Right cardiac atrium (tissue), 5 donors: ENCODE measurements at regions of chrX and their contacts with region 1.

Region 1: DNA sequence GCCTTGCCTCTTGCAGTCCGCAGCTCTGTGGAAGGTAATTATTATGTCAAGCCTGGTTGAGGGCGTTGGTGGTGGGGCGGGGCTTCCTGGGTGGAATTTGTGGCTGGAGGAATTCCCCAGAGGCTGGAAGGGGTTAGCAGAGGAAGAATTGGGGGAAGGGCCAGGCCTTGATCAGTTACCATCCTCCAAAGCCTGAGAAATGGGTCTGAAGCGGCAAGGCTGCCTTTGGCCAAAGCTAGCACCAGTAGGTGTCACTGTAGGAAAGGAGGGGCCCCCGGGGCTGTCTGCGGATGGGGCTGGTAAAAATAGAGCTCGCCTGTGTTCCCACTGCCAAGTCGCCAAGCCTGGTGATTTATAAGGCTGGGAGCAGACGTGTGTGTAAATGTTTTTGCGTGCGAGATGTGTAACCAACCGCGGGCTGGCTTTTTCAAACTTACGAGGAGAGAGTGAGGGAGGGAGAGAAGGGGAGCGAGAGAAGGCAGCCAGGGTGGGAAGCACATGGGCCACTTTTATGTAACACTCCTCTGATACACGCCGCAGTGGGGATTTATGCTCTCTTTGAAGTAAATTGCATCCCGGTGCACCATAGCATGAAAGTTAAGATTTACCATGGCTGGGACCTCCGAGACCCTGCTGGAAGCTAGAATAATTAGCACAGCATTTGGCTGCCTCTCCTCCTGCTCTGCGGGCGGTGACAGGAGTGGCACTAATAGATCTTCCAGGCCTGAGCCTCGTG is 366.9 kb downstream of the BCOR start:
- DNase-seq: peak; percentile 74 to 85 (median 85)
- ATAC-seq: peak; percentile 82 to 84
- H3K4me3 ChIP-seq: no peak overlapping the region
- H3K27ac ChIP-seq: no peak overlapping the region
- H3K4me1 ChIP-seq: peaks cover 8% of the 10 kb centered on the region
- H3K27me3 ChIP-seq: no peaks in the 10 kb centered on the region

Region 2: GRCh38 chrX:39633293-39633692 is 97.5 kb before region 1 on chrX:
- intact Hi-C with region 1: no loop called
- DNase-seq: no peak
- ATAC-seq: no peak
- H3K4me3 ChIP-seq: no peak overlapping the region
- H3K27ac ChIP-seq: no peak overlapping the region
- H3K4me1 ChIP-seq: no peaks in the 10 kb centered on the region
- H3K27me3 ChIP-seq: no peaks in the 10 kb centered on the region

Region 3: GRCh38 chrX:40097497-40098263 is 366.9 kb after region 1 on chrX and contains the start of gene BCOR:
- intact Hi-C with region 1: loop called in 1 of 4 experiments (anchors 10 kb)
- DNase-seq: peak; percentile 78 to 92 (median 89)
- ATAC-seq: peak; percentile 51 to 62
- H3K4me3 ChIP-seq: peak within 1 kb of the TSS; percentile 97
- H3K27ac ChIP-seq: peak within 1 kb of the TSS; percentile 96
- H3K4me1 ChIP-seq: no peaks in the 10 kb centered on the region
- H3K27me3 ChIP-seq: no peaks in the 10 kb centered on the region
- total RNA-seq, gene BCOR: 18.1 to 30.1 (median 20.5) TPM